ENCODE measurements at regions of chr19 and their contacts with region 1.

Region 1: GRCh38 chr19:52336117-52336790 is at the start of gene ZNF610:
- DNase-seq: peak; percentile 94
- H3K4me3 ChIP-seq: peak within 1 kb of the TSS; percentile 58 to 76 (median 68)
- H3K27ac ChIP-seq: peak within 1 kb of the TSS; percentile 78 to 87 (median 80)
- H3K4me1 ChIP-seq: peaks cover 0 to 17% (median 7%) of the 10 kb centered on the region in 4 donors
- H3K27me3 ChIP-seq: no peaks in the 10 kb centered on the region
- CTCF ChIP-seq: no peak
- EP300 ChIP-seq: peak in 1 of 4 donors; percentile 19
- POLR2A ChIP-seq: peak; percentile 21 to 40
- total RNA-seq, gene ZNF610: 2.0 to 3.2 (median 2.5) TPM

Region 2: DNA sequence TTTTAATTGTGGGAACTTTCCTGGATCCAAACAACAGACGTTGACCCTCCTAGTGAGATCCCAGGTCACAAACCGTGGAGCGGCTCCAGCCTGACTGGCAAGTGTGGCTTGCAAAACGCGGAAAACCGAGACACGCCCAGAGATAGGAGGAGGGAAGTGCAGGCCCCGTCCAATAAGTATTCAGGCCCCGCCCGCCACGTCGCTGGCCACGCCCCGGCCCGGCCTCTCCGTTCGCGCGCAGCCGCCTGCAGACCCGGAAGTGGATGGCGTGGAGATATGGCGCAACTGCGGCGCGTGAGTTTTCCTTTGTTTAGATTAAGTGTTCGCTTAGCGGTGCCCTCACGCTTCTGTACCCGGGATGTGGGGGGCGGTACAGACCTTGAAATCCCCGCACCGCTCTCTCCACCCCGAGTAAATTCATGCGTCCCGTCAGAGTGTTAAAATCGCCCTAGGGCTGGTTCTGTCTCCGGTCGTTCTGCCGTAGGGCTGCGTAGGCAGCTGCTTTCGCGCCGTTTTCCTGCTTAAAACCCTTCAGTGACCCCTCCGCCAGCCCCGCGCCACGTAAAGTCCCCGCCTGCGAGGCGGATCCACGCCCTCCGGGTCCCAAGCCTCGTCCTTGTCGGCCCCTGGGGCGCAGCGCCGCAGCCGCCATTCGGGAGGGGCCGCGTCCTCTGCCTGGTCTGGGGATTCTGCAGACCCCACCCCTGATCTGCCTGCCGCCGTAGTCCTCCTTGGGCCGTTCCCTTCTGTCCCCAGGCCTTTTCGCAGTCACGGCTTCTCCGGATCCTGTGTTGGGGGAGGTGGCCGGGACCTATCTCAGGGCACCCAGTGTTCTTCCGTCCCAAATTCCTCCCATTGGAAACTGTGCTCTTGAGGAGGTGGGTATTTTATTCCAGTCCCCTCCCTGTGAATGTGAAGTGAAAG is 66.7 kb before region 1 on chr19 and contains the start of gene ZNF766:
- intact Hi-C with region 1: loop called (anchors 5 kb)
- DNase-seq: peak; percentile 99
- H3K4me3 ChIP-seq: peak within 1 kb of the TSS; percentile 69 to 100 (median 94)
- H3K27ac ChIP-seq: peak within 1 kb of the TSS; percentile 95 to 100 (median 98)
- H3K4me1 ChIP-seq: peaks cover 0 to 22% (median 19%) of the 10 kb centered on the region in 4 donors
- H3K27me3 ChIP-seq: no peaks in the 10 kb centered on the region
- CTCF ChIP-seq: no peak
- EP300 ChIP-seq: no peak
- POLR2A ChIP-seq: peak; percentile 78 to 82
- total RNA-seq, gene ZNF766: 5.5 to 11.0 (median 9.9) TPM

Region 3: DNA sequence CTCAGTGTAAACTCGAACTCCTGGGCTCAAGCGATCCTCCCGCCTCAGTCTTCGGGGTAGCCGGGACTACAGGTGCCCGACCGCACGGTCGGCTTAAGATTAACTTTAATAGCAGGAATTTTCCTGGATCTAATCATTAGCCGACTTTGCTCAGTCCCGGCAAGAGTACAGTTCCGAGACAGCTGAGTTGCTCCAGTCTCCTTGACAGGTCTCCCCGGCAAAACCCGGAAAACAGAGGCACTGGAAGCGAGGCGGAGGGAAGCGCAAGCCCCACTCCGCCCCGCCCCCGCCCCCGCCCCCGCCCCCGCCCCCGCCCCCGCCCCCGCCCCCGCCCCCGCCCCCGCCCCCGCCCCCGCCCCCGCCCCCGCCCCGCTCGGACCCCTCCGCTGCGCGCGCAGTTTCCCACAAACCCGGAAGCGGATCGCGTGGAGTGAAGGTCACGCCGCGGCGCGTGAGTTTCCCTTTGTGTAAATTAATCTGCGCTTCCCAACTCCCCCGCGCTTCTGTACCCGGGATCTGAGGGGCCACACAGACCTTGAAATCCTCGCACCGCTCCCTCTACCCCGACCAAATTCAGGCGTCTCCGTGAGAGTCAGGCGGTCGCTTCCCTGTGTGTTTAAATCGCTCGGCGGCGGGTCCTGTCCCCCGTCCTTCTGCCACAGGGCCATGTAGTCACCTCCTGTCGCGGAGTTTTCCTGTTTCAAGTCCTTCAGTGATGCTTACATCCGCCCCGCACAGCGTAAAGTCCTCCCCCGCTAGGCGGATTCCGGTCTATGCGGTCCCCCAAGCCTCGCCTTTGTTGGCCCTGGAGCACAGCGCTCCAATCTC is 39.3 kb before region 1 on chr19 and contains the start of gene ZNF480:
- intact Hi-C with region 1: loop called (anchors 2 kb)
- DNase-seq: peak; percentile 92
- H3K4me3 ChIP-seq: peak within 1 kb of the TSS; percentile 64 to 93 (median 84)
- H3K27ac ChIP-seq: peak within 1 kb of the TSS; percentile 89 to 95 (median 92)
- H3K4me1 ChIP-seq: peaks cover 0 to 19% (median 12%) of the 10 kb centered on the region in 4 donors
- H3K27me3 ChIP-seq: no peaks in the 10 kb centered on the region
- CTCF ChIP-seq: peak in 2 of 4 experiments; percentile 13 to 15
- EP300 ChIP-seq: no peak
- POLR2A ChIP-seq: peak; percentile 42 to 61
- total RNA-seq, gene ZNF480: 7.5 to 11.2 (median 8.1) TPM

Region 4: GRCh38 chr19:52369559-52370340 is 33.5 kb after region 1 on chr19 and contains the start of gene ZNF880:
- intact Hi-C with region 1: loop called (anchors 2 kb)
- DNase-seq: peak; percentile 96
- H3K4me3 ChIP-seq: peak within 1 kb of the TSS; percentile 64 to 79 (median 71)
- H3K27ac ChIP-seq: peak within 1 kb of the TSS; percentile 90 to 95 (median 90)
- H3K4me1 ChIP-seq: peaks cover 0 to 8% (median 4%) of the 10 kb centered on the region in 4 donors
- H3K27me3 ChIP-seq: no peaks in the 10 kb centered on the region
- CTCF ChIP-seq: no peak
- EP300 ChIP-seq: no peak
- POLR2A ChIP-seq: peak in 1 of 2 donors; percentile 43
- total RNA-seq, gene ZNF880: 21.6 to 24.8 (median 23.0) TPM

Region 5: DNA sequence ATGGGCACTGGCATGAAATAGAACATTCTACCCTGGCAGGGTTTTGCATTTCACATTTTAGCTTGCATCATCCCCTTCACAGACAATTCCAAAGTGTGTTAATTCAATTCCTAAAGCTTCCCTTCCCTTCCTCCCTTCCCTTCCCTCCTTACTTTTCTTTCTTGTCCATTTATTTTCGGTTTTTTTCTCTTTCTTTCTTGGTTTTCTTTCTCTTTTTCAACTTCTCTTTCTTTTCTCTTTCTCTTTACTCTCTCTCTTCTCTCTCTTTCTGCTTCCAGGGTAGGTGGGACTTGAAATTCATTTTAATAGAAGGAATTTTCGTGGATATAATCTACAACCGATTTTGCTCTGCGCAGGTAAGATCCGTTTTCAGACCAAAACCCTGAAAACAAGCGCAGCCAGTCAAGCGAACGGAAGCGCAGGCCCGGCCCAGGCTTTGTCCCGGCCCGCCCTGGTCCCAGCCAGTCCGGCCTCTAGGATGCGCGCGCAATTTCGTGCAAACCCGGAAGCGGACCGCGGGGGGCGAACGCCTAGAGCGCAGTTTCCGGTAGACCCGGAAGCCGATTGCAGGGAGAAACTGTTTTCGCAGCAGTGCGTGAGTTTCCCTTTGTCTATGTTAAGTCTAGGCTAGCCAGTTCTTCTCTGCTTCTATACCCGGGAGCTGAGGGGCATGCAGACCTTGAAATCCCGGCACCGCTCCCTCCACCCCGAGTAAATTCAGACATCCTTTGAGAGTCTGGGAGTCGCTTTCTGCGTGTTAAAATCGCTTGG is 61.2 kb after region 1 on chr19 and contains the start of gene ZNF528:
- intact Hi-C with region 1: loop called (anchors 1 kb)
- DNase-seq: peak; percentile 97
- H3K4me3 ChIP-seq: peak within 1 kb of the TSS; percentile 52 to 72 (median 66)
- H3K27ac ChIP-seq: peak within 1 kb of the TSS; percentile 63 to 81 (median 68)
- H3K4me1 ChIP-seq: peaks cover 0 to 19% (median 18%) of the 10 kb centered on the region in 4 donors
- H3K27me3 ChIP-seq: no peaks in the 10 kb centered on the region
- CTCF ChIP-seq: no peak
- EP300 ChIP-seq: peak in 1 of 4 donors; percentile 45
- POLR2A ChIP-seq: peak in 1 of 2 donors; percentile 38
- total RNA-seq, gene ZNF528: 15.5 to 27.4 (median 20.2) TPM